ENCODE measurements at regions of chr2 and their contacts with region 1.

Region 1: GRCh38 chr2:230068016-230068650 is 591 bp downstream of the SLC16A14 start:
- DNase-seq: peak; percentile 52
- ATAC-seq: peak; percentile 52
- H3K4me3 Mint-ChIP-seq: peak overlapping the region; percentile 68
- H3K27ac Mint-ChIP-seq: no peak overlapping the region
- H3K4me1 Mint-ChIP-seq: peaks cover 25% of the 10 kb centered on the region
- H3K27me3 Mint-ChIP-seq: peaks cover 45% of the 10 kb centered on the region

Region 2: DNA sequence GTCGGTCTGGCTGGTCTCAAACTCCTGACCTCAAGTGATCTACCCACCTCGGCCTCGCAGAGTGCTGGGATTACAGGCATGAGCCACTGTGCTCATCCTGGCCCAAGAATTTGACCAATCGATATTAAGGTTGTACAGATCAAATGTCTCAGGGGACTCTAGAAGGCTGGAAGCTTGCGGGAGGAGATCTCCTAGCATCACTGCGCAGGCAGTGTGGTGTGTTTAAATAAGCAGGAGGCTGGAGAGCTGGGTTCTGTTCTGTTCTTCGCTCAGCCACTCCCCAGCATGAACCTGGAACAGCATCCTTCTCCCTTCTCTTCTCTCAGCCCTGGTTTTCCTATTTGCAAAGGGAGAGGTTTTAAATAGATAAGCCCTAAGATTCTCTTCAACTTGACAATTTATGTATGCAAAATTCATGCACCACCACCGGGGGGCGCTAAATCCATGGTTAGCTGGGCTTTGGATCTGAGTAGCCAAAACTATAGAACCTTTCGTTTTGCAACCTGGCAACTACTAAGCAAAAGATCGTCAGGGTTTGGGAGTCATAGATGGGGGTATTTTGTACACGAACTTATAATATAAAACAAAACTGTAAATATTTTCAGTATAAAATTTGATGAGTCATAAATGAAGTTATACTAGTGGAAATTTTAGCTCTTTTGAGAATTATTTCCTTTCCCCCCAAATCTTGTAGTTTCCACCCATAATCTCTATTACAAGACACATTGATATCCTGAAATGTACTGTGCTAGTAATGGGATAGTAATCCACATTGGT is 60.0 kb before region 1 on chr2:
- CTCF ChIA-PET with region 1: interaction called, 10 read pairs
- DNase-seq: peak; percentile 85
- ATAC-seq: peak; percentile 53
- H3K4me3 Mint-ChIP-seq: peak overlapping the region; percentile 32
- H3K27ac Mint-ChIP-seq: no peak overlapping the region
- H3K4me1 Mint-ChIP-seq: peaks cover 8% of the 10 kb centered on the region
- H3K27me3 Mint-ChIP-seq: no peaks in the 10 kb centered on the region

Region 3: DNA sequence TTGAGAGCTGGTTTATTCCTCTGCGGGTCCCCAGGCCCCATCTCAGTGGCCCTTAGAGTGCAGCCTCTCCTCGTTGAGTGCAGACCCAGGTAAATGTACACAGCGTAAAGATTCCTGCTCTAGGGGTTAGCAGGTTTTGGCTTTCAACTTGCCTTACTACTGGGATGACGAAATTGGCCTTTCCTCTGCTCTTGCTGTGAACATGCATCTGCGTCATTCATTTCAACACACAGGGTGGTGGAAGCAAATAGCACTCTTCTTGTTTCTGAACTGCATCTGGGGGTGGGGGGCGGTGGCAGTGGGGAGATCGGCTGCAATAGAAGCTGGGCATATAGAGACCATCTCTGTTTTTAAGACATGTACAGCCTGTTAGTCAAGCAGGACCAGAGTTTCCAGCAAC is 17.1 kb after region 1 on chr2:
- CTCF ChIA-PET with region 1: interaction called, 16 read pairs
- DNase-seq: no peak
- ATAC-seq: no peak
- H3K4me3 Mint-ChIP-seq: no peak overlapping the region
- H3K27ac Mint-ChIP-seq: no peak overlapping the region
- H3K4me1 Mint-ChIP-seq: no peaks in the 10 kb centered on the region
- H3K27me3 Mint-ChIP-seq: peaks cover 13% of the 10 kb centered on the region

Region 4: GRCh38 chr2:230130668-230131364 is 62.7 kb after region 1 on chr2:
- CTCF ChIA-PET with region 1: interaction called, 19 read pairs
- DNase-seq: no peak
- ATAC-seq: no peak
- H3K4me3 Mint-ChIP-seq: no peak overlapping the region
- H3K27ac Mint-ChIP-seq: no peak overlapping the region
- H3K4me1 Mint-ChIP-seq: peaks cover 19% of the 10 kb centered on the region
- H3K27me3 Mint-ChIP-seq: peaks cover 2% of the 10 kb centered on the region

Measured in activated CD8-positive, alpha-beta memory T cell treated with anti-CD3 and anti-CD28 coated beads, Interleukin-2, amount 10 ng/mL, durations not matched to agents 7 days and 5 days (primary cell).